ENCODE measurements at regions of chr4 and their contacts with region 1.

Region 1: GRCh38 chr4:25312496-25313200 is at the start of gene ZCCHC4:
- DNase-seq: peak; percentile 72 to 89
- H3K4me3 ChIP-seq: peak within 1 kb of the TSS; percentile 93
- H3K27ac ChIP-seq: peak within 1 kb of the TSS; percentile 73
- H3K4me1 ChIP-seq: peaks cover 17% of the 10 kb centered on the region
- H3K27me3 ChIP-seq: no peaks in the 10 kb centered on the region
- CTCF ChIP-seq: peak; percentile 86
- total RNA-seq, gene ZCCHC4: 11.7 and 12.2 TPM in 2 replicates

Region 2: DNA sequence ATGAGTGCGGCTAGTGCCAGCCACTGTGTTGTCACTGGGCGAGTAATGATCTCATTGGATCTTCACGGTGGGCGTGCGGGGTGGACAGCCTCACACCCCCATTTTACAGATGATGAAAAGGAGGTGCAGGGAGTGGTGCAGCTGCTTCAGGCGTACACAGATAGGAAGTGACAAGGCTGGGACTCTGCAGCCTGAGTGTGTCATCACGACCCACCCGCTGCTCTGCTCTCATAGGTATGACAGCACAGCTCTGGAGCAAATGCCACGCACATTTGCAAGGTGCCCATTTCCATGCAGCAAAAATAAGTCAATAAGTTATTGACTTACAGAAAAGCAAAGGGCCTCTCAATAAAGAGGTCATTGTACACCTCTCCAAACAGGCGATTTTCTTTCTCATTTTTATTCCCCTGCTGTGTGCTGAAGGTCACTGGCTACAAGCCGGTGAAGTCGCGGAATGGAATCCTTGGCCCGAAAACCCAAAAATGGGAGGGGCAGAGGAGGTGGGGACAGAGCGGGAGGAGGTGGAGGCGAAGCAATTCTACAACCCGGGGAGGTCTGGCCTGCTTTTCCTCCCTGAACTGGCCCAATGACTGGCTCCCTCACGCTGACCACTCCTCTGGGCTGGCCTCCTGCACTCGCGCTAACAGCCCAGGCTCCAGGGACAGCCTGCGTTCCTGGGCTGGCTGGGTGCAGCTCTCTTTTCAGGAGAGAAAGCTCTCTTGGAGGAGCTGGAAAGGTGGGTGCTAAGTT is 517.6 kb before region 1 on chr4 and contains the start of gene SOD3:
- CTCF ChIA-PET with region 1: no interaction called
- POLR2A ChIA-PET with region 1: interaction called, 20 read pairs
- intact Hi-C with region 1: no loop called
- DNase-seq: peak; percentile 78 to 86
- H3K4me3 ChIP-seq: peak within 1 kb of the TSS; percentile 34; the same call in 1 of the 2 replicates
- H3K27ac ChIP-seq: peak within 1 kb of the TSS; percentile 25; the same call in 1 of the 2 replicates
- H3K4me1 ChIP-seq: peaks cover 12% of the 10 kb centered on the region
- H3K27me3 ChIP-seq: no peaks in the 10 kb centered on the region
- CTCF ChIP-seq: no peak
- total RNA-seq, gene SOD3: 6.3 and 7.6 TPM in 2 replicates

Region 3: DNA sequence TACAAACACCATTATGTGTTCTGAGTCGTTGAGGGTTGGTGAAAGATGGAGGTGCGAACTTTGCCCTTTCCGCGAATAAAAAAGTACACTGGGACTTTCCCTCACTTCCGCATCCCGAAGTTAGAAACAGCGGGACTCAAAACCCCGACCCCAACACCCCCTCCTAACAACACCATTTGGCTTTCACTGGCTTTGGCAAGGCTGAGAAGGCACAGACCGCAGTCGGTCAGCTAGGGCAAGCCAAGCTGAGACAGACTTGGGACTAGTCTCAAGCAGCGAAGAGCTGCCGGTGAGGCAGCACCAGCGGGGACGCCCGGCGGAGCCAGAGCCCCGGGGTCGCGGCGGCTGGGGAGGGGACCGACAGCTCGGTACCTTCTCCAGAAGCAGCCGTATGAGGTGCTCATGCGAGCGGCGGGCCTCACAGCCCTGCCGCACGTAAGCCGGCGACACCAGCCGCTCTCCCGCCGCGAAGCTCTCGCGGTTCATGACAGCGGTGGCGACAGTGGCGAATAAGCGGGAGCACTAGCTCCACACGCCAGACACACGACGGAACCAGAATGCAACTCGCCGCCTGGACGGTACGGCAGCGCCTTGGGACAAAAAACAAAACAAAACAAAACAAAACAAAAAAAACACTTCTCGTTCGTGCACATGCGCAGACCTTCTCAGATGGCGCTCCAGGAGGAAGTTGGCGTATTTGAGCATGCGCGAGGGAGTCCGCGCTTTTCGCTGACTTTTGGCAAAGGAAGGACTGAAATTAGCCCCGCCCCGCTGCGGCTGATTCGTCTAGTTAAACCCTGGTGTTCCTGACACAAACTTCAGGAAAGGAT is 152.5 kb before region 1 on chr4 and contains the start of gene SEPSECS:
- CTCF ChIA-PET with region 1: interaction called, 6 read pairs
- POLR2A ChIA-PET with region 1: interaction called, 15 read pairs
- intact Hi-C with region 1: loop called (anchors 1 kb)
- DNase-seq: peak; percentile 93 to 95
- H3K4me3 ChIP-seq: peak within 1 kb of the TSS; percentile 74
- H3K27ac ChIP-seq: peak within 1 kb of the TSS; percentile 72
- H3K4me1 ChIP-seq: peaks cover 26% of the 10 kb centered on the region
- H3K27me3 ChIP-seq: no peaks in the 10 kb centered on the region
- CTCF ChIP-seq: no peak
- total RNA-seq, gene SEPSECS: 9.1 and 11.3 TPM in 2 replicates

Region 4: DNA sequence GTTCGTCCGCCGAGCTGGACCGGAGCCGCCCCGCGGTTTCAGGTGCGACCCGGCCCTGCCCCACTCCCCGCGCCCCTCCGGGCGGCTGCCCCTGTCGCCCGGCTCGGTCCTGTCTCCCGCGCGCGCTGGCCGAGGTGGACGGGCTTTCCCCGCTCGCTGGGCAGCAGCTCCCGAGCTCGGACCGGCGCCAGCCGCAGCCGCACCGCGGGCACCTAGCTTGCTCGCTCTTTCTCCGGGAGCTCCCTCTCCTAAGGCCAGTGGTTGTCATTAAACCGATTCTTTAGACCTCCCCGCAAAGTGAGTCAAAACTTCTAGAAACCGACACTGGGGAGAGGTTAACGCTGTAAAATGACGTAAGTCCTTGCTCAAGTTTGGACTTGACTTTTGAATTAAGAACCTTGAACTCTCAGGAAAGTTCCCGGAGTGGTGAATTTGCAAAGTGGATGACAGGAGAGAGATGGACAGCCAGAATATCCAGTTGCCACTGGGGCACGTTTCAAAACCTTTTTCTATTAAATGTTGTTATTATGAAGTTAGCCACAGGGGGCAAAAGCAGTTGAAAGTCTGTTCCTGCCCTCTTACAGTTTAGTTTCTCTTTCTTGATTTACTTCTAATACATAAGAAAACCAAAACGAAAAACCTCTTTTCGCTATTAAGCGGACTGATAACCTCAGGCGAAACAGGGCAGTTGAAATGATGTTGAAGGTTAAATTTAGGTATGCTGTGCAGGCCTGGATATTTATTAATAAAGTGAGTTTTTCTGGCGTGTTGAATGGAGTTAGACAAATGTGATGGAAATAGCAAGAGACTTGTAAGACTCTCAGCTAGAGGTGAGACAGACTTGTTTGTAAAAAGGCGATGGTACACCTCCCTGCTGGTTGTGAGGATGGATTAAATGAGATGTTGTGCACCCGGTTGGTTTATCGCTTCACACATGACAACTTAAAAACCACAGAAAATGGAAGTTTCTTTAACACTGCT is 78.0 kb before region 1 on chr4:
- CTCF ChIA-PET with region 1: interaction called, 12 read pairs
- POLR2A ChIA-PET with region 1: interaction called, 14 read pairs
- intact Hi-C with region 1: loop called (anchors 1 kb)
- DNase-seq: peak; percentile 46 to 72
- H3K4me3 ChIP-seq: peak overlapping the region; percentile 78
- H3K27ac ChIP-seq: peak overlapping the region; percentile 26
- H3K4me1 ChIP-seq: peaks cover 6% of the 10 kb centered on the region
- H3K27me3 ChIP-seq: no peaks in the 10 kb centered on the region
- CTCF ChIP-seq: peak; percentile 69

Region 5: DNA sequence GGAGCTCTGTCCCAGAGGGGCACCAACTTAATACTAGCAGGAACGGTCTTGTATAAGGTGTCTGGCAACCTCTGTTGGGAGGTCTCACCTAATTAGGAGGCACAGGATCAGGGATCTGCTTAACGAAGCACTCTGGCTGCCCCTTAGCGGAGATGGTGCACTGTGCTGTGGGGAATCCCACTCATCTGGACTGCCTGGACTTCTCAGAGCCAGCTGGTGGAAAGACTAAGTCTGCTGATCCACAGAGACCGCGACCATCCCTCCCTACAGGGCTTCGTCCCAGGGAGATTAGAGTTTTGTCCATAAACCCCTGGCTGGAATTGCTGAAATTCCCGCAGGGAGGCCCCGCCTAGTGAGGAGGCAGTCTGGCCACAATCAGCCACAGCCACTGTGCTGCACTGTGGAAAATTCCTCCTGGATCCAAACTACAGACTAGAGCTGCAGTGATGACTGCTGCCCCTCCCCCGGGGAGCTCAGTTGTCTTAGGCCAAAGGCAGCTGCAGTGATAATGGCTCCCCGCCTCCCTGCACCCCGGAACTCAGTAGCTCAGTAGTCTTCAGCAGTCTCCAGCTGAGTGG is 22.1 kb before region 1 on chr4:
- CTCF ChIA-PET with region 1: no interaction called
- POLR2A ChIA-PET with region 1: interaction called, 10 read pairs
- intact Hi-C with region 1: no loop called
- DNase-seq: no peak
- H3K4me3 ChIP-seq: no peak overlapping the region
- H3K27ac ChIP-seq: no peak overlapping the region
- H3K4me1 ChIP-seq: no peaks in the 10 kb centered on the region
- H3K27me3 ChIP-seq: no peaks in the 10 kb centered on the region
- CTCF ChIP-seq: no peak

Region 6: GRCh38 chr4:25299480-25300188 is 13.0 kb before region 1 on chr4:
- CTCF ChIA-PET with region 1: interaction called, 11 read pairs
- POLR2A ChIA-PET with region 1: interaction called, 5 read pairs
- intact Hi-C with region 1: loop called (anchors 2 kb)
- DNase-seq: peak; percentile 68 to 91
- H3K4me3 ChIP-seq: peak overlapping the region; percentile 13; the same call in 1 of the 2 replicates
- H3K27ac ChIP-seq: peak overlapping the region; percentile 52
- H3K4me1 ChIP-seq: peaks cover 18% of the 10 kb centered on the region
- H3K27me3 ChIP-seq: no peaks in the 10 kb centered on the region
- CTCF ChIP-seq: no peak

Region 7: DNA sequence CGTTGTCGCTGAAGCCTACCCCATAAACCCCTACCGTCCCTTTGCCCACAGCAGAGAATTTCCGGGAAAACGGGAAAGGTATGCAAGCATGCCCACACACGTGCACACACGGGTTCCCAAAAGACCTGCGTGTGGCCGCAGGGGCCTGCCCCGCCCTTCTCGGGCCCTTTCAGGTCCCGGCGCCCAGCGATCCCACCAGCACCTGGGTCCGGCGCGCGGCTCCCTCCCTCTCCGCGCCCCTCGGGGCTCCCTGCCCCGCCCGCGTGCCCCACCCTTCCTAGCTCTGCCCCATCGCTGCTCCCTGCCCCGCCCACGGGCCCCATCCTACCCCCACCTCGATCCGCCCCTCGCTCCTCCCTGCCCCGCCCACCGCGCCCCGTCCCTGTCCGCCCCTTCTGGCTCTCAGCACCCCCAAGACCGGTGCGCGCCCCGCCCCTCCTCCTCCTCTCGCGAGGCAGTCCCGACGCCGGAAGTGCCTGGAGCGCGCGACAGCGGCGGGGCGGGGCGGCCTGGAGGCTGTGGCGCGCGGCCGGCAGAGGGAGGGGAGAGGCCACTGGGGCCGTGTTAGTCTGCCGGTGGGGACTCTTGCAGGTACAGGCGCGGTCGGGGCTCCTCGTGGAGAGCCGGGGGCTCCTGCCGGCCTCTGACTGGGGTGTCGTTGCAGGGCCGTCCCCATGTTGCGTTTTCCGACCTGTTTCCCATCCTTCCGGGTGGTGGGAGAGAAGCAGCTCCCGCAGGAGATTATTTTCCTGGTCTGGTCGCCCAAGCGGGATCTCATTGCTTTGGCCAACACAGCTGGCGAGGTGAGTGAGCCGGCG is 64.3 kb after region 1 on chr4 and contains the start of gene ANAPC4:
- CTCF ChIA-PET with region 1: no interaction called
- POLR2A ChIA-PET with region 1: no interaction called
- intact Hi-C with region 1: loop called (anchors 1 kb)
- DNase-seq: peak; percentile 77 to 95
- H3K4me3 ChIP-seq: peak within 1 kb of the TSS; percentile 92
- H3K27ac ChIP-seq: peak within 1 kb of the TSS; percentile 37; the same call in 1 of the 2 replicates
- H3K4me1 ChIP-seq: peaks cover 11% of the 10 kb centered on the region; the same call in 1 of the 2 replicates
- H3K27me3 ChIP-seq: no peaks in the 10 kb centered on the region
- CTCF ChIP-seq: no peak
- total RNA-seq, gene ANAPC4: 22.9 and 25.8 TPM in 2 replicates